ENCODE measurements at regions of chr1 and their contacts with region 1.

Region 1: GRCh38 chr1:108670131-108670773 is 9.4 kb upstream of the HENMT1 start:
- DNase-seq: no peak
- ATAC-seq: no peak
- H3K4me3 ChIP-seq: no peak overlapping the region
- H3K27ac ChIP-seq: no peak overlapping the region
- H3K4me1 ChIP-seq: no peaks in the 10 kb centered on the region
- H3K27me3 ChIP-seq: no peaks in the 10 kb centered on the region
- CTCF ChIP-seq: no peak
- EP300 ChIP-seq: no peak
- POLR2A ChIP-seq: no peak
- RAD21 ChIP-seq: no peak

Region 2: DNA sequence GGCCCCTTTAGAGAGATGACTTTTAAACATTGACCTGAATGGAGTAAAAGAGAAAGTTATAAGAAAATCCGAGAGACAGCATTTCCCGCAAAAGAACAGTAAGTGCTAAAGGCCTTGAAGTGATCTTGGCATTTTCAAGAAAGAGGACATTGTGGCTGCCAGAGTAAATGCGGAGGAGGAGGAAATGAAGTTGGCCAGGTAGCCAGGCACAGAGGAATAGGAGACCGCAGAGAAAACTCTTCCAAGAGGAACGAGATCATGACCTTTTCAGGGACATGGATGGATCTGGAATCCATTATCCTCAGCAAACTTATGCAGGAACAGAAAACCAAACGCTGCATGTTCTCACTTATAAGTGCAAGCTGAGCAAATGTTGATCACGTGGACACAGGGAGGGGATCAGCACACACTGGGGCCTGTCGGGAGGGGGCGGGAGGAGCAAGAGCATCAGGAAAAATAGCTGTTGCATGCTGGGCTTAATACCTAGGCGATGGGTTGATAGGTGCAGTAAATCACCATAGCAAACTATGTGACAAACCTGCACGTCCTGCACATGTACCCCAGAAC is 60.7 kb before region 1 on chr1:
- CTCF ChIA-PET with region 1: no interaction called
- POLR2A ChIA-PET with region 1: no interaction called
- RAD21 ChIA-PET with region 1: no interaction called
- SMC1A ChIA-PET with region 1: no interaction called
- in situ Hi-C with region 1: no loop called
- intact Hi-C with region 1: loop called (anchors 10 kb)
- DNase-seq: no peak
- ATAC-seq: no peak
- H3K4me3 ChIP-seq: no peak overlapping the region
- H3K27ac ChIP-seq: no peak overlapping the region
- H3K4me1 ChIP-seq: no peaks in the 10 kb centered on the region
- H3K27me3 ChIP-seq: no peaks in the 10 kb centered on the region
- CTCF ChIP-seq: no peak
- EP300 ChIP-seq: no peak
- POLR2A ChIP-seq: no peak
- RAD21 ChIP-seq: no peak

Region 3: GRCh38 chr1:109181105-109181806 is 511.0 kb after region 1 on chr1:
- CTCF ChIA-PET with region 1: no interaction called
- POLR2A ChIA-PET with region 1: no interaction called
- RAD21 ChIA-PET with region 1: no interaction called
- SMC1A ChIA-PET with region 1: no interaction called
- in situ Hi-C with region 1: no loop called
- intact Hi-C with region 1: no loop called
- DNase-seq: no peak
- ATAC-seq: no peak
- H3K4me3 ChIP-seq: no peak overlapping the region
- H3K27ac ChIP-seq: no peak overlapping the region
- H3K4me1 ChIP-seq: no peaks in the 10 kb centered on the region
- H3K27me3 ChIP-seq: no peaks in the 10 kb centered on the region
- CTCF ChIP-seq: no peak
- EP300 ChIP-seq: no peak
- POLR2A ChIP-seq: no peak
- RAD21 ChIP-seq: no peak

Region 4: DNA sequence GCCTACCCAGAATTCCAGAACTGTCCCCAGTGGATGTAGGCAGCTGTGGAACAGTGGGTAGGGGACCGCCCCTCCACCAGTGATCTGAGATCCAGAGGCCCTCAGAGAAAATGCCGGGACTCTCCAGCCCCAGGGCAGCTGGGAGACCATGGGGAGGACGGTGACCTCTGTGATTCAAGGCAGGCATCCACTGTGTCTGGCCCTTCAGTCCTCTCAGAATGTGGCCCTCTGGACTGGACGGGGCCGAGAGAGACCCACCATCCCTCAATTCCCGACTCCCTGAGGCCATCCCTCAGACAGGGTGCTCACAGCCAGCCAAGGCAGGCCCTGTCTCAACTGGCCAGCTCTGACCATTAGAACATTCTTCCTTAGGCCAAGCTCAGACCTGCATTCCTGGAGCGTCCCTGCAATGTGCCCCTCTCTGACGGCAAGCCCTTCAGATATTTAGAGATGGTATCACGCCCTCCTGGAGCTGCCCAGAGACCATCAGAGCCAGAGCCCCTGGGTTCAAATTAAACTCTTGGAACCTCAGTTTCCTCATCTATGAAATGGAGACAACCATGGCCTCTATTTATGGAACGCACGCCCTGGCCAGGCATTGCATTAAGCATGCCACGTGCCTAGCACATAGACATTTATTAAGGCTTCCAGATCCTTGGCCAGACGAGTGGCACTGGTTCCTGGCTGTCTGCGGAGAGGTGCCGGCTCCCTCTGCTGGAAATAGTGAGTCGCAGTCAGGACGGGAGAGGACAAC is 1103.1 kb after region 1 on chr1:
- CTCF ChIA-PET with region 1: no interaction called
- POLR2A ChIA-PET with region 1: no interaction called
- RAD21 ChIA-PET with region 1: no interaction called
- SMC1A ChIA-PET with region 1: no interaction called
- in situ Hi-C with region 1: no loop called
- intact Hi-C with region 1: no loop called
- DNase-seq: peak; percentile 28
- ATAC-seq: peak; percentile 94
- H3K4me3 ChIP-seq: no peak overlapping the region
- H3K27ac ChIP-seq: no peak overlapping the region
- H3K4me1 ChIP-seq: no peaks in the 10 kb centered on the region
- H3K27me3 ChIP-seq: peaks cover 0 to 2% of the 10 kb centered on the region in 2 experiments; a peak in 1 of 4 replicates
- CTCF ChIP-seq: peak; percentile 90 to 97 (median 92)
- EP300 ChIP-seq: no peak
- POLR2A ChIP-seq: no peak
- RAD21 ChIP-seq: peak; percentile 98